ENCODE measurements at regions of chr1 and their contacts with region 1.

Region 1: GRCh38 chr1:153572569-153573015 is 6.9 kb upstream of the S100A2 start:
- DNase-seq: peak; percentile 79 to 80 (median 79)
- H3K4me3 ChIP-seq: peak overlapping the region in 1 of 7 experiments; percentile 18
- H3K27ac ChIP-seq: no peak overlapping the region
- H3K4me1 ChIP-seq: peaks cover 7 to 33% (median 23%) of the 10 kb centered on the region in 4 experiments
- H3K27me3 ChIP-seq: peaks cover 0 to 1% (median 0%) of the 10 kb centered on the region in 5 experiments

Region 2: DNA sequence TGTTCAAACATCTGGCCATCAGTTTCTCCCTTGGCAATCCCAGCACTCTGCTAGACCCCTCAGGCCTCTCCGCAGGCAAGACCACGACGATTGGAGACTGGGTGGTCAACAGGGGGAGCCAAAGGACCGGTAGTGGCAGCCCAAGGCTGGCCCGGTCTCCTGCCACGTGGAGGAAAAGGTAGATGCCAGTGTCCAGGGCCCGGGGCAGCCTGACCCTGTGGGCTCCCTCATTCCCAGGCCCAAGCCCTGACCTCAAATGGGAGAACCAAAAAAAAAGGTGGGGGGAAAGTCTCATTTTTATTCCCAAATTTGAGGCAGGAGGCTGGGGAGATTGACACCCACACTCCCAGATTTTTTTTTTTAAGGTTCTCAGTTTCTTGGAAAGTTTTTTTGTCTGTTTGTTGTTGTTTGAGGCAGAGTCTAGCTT is 61.6 kb before region 1 on chr1:
- CTCF ChIA-PET with region 1: interaction called, 69 read pairs
- POLR2A ChIA-PET with region 1: no interaction called
- DNase-seq: peak; percentile 61 to 74 (median 63)
- H3K4me3 ChIP-seq: no peak overlapping the region
- H3K27ac ChIP-seq: no peak overlapping the region
- H3K4me1 ChIP-seq: peaks cover 0 to 14% (median 9%) of the 10 kb centered on the region in 4 experiments
- H3K27me3 ChIP-seq: no peaks in the 10 kb centered on the region

Region 3: DNA sequence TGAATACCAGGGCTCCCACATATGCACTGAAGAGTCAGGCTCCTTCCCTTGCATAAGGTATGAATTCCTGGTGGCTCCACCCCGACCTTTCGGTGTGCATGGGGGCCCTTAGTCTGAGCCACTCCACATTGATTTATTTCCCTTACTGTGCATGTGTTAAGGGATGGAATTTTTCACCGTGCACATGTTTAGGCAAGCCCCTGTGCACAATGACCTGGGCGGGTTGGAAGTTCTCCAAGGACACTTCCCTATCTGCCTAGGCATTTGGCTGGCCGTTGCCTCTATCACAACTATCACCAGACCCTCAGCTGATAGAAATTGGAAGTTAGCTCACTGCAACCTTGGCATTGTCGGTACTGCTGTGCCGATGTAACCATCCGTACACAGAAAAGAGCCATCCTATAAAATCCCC is 46.5 kb before region 1 on chr1:
- CTCF ChIA-PET with region 1: interaction called, 169 read pairs
- POLR2A ChIA-PET with region 1: no interaction called
- DNase-seq: no peak
- H3K4me3 ChIP-seq: no peak overlapping the region
- H3K27ac ChIP-seq: no peak overlapping the region
- H3K4me1 ChIP-seq: peaks cover 0 to 17% (median 4%) of the 10 kb centered on the region in 4 experiments
- H3K27me3 ChIP-seq: no peaks in the 10 kb centered on the region

Region 4: DNA sequence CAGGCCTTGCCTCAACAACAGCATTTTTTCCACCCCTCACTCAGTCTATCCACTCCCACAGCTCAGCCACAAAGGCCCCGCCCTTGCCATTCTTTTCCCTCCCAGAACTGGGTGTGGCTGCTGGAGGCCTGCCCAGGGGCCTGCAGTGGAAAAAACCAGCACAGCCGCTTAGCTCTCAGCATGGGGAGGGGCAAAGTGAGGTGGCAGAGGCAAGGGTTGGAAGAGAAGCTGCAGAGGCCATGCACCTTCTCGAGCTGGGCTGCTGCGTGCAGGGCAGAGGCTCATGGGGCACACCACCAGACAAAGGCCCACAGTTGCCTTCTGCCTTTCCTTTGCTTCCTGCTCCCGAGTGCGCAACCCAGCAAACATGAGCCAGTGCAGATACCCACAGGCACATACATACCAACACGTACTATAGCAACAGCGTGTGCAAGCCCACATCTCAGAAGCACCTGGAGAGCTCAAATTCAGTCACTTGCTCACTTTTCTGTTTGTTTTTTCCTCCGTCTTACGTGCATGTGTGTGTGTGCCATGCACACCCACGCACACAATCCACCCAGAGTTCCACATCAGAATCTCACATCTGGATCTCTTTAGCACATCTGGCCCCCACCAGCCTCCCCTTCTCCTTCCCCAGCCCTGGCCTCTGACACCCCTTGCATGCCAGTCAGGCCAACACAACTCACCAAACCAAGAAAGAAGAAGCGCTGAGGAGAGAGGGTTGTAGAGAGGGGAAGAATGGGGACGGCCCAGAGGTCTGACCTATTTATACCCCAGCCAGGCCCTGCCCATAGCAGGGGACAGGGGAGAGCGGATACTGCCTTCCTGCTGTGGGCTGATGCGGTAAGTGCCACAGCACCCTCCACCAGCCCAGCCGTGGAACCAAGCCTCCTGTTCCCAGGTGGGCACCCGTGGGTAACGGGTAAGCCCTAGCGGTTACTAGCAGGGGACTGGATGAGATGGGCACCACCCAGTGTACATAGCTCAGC is 27.2 kb before region 1 on chr1 and contains the start of gene S100A4:
- CTCF ChIA-PET with region 1: interaction called, 35 read pairs
- POLR2A ChIA-PET with region 1: interaction called, 4 read pairs
- DNase-seq: peak; percentile 83 to 93 (median 92)
- H3K4me3 ChIP-seq: peak within 1 kb of the TSS; percentile 21 to 87 (median 65)
- H3K27ac ChIP-seq: peak within 1 kb of the TSS; percentile 51 to 77
- H3K4me1 ChIP-seq: peaks cover 5 to 100% (median 63%) of the 10 kb centered on the region in 4 experiments
- H3K27me3 ChIP-seq: no peaks in the 10 kb centered on the region

Region 5: DNA sequence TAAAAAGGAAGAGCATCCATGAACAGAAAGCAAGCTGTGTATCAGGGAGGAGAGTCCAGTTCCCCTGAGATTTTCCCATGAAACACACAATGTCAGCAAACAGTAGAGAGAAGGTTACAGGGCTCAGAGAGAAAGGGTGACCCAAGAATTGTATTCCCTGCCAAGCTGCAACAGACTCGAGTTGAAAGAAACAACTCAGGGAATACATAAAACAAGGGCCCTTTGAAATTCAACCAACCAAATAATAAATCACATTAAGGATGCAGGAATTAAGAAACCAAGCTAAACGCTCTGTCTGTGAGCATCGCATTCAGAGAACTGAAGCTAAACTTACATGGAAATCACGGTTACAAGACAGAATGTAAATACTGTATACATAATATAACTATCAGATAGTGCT is 20.2 kb after region 1 on chr1:
- CTCF ChIA-PET with region 1: interaction called, 14 read pairs
- POLR2A ChIA-PET with region 1: no interaction called
- DNase-seq: no peak
- H3K4me3 ChIP-seq: no peak overlapping the region
- H3K27ac ChIP-seq: no peak overlapping the region
- H3K4me1 ChIP-seq: peaks cover 0 to 7% (median under 1%) of the 10 kb centered on the region in 4 experiments
- H3K27me3 ChIP-seq: no peaks in the 10 kb centered on the region

Region 6: DNA sequence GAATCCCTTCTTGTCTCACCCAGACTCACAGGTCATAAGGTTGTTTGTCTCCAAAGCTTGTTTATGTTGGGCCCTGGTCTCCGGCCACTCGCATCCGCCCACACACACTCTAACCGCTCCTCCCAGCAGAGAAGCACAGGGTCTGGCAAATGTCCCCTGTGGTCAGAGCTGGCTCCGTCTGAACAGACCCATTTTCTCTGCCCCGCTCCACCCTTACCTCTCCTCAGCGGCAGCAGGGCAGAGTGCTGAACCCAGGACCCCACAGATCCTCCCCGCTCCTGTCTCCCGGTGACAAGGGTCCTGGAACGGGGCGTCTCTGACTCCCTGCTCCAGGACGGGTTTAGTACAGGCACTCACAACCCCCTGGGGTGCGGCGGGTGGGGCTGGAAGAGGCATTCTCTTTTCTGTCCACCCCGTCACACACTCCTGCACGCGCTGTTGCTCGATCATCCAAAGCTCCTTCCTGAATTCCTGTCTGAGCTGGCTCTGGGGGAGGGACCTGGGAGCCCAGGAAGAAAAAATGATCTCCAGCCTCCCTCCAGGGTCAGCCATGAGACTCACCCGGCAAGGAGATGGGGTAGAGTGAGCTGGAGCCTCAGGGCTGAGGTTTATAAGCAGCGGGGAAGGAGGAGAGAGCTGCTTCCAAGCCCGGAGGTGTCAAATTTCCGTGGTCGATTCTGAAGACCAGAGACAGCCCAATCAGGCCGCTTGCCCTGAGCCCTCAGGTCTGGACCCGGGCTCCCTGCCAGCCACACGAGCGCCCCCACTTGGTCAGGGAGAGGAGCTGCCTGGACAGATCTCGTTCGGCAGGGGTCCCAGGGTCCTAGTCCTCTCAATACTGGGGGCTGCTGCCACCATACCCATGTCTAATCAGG is 54.6 kb after region 1 on chr1 and contains the start of gene S100A13:
- CTCF ChIA-PET with region 1: interaction called, 262 read pairs
- POLR2A ChIA-PET with region 1: no interaction called
- DNase-seq: peak in 2 of 3 donors; percentile 68 to 70
- H3K4me3 ChIP-seq: peak within 1 kb of the TSS in 4 of 7 experiments; percentile 22 to 66 (median 42)
- H3K27ac ChIP-seq: peak within 1 kb of the TSS in 1 of 2 experiments; percentile 67
- H3K4me1 ChIP-seq: peaks cover 0 to 22% (median 11%) of the 10 kb centered on the region in 4 experiments
- H3K27me3 ChIP-seq: peaks cover 0 to 2% (median 0%) of the 10 kb centered on the region in 5 experiments

Region 7: GRCh38 chr1:154558575-154559465 is 986.2 kb after region 1 on chr1 and contains the start of gene UBE2Q1:
- CTCF ChIA-PET with region 1: no interaction called
- POLR2A ChIA-PET with region 1: no interaction called
- DNase-seq: peak; percentile 99 to 100 (median 100)
- H3K4me3 ChIP-seq: peak within 1 kb of the TSS; percentile 74 to 92 (median 82)
- H3K27ac ChIP-seq: peak within 1 kb of the TSS; percentile 72 to 84
- H3K4me1 ChIP-seq: peaks cover 14 to 31% (median 27%) of the 10 kb centered on the region in 4 experiments
- H3K27me3 ChIP-seq: no peaks in the 10 kb centered on the region